B cell (primary cell): ENCODE measurements at regions of chr14 and their contacts with region 1.

Region 1: DNA sequence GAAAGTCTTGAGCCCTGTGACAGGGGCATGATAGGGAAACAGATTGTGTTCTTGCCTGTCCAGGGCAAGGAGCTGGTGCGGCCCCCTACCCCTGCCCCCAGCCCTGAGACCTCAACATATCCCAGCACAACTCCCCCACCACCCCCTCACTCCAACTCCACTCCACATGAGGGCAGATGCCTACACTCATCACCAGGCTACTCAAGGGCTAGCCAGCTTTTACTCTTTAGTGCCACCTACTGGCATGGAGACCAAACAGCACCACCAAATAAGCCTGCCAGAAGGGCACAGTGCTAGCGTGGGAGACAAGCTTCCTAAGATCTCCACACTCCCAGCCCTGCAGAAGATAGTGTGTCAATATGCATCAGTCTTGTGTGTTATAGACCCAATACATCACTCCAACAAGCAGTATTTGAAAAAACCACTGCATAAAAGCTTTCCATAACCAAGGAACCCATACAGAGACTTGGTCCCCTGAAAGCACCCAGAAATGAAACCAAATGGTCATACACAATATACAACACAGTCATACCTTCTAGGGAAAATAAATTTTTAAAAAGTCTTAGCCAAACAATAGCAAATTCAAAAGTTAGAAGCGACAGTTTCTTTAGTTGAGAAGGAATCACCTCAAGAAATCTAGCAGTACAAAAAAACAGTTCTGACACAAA is 154.4 kb downstream of the KCNK10 start:
- DNase-seq: peak; percentile 66
- ATAC-seq: peak; percentile 75
- H3K4me3 ChIP-seq: no peak overlapping the region
- H3K4me3 Mint-ChIP-seq: no peak overlapping the region
- H3K27ac ChIP-seq: no peak overlapping the region
- H3K27ac Mint-ChIP-seq: no peak overlapping the region
- H3K4me1 ChIP-seq: no peaks in the 10 kb centered on the region
- H3K4me1 Mint-ChIP-seq: no peaks in the 10 kb centered on the region
- H3K27me3 ChIP-seq: peaks cover 0 to 21% (median 2%) of the 10 kb centered on the region in 4 experiments
- H3K27me3 Mint-ChIP-seq: peaks cover 42% of the 10 kb centered on the region
- CTCF ChIP-seq: peak; percentile 76

Region 2: DNA sequence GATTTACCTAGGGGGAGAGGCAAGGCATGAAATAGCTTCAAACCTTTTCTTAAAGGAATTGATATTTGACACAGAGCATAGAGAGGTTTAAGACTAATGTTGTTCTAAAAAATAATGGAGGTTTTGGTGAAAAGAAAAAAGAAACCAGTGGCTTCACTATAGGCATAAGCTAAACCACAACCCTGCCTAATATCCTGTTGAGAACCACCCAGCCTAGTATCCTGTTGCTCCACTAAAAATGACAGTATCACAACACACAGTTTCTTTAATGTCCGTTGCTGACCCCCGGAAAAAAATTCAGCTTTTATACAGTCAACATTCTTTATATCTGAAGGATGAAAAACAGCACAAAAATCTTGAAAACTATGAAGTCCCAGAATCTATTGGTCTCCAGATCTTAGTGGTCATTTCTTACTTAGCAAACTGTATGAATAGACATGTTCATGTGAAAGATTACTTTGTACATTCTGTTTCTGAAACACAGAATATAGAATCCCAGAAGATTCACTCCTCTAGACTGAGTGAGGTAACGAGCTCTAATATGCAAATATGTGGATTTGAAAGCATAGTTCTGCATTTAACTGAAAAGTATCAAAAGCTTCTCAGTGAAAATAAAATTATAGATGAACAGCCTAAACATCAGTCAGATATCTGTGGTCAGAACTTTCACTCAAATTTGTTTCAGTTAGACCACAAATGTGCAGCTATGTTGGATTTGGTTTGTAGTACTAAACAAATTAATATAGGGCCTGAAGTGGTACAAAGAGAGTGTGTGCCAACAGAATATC is 216.1 kb before region 1 on chr14:
- CTCF ChIA-PET with region 1: interaction called, 149 read pairs
- POLR2A ChIA-PET with region 1: no interaction called
- intact Hi-C with region 1: no loop called
- DNase-seq: peak; percentile 28
- ATAC-seq: peak; percentile 41
- H3K4me3 ChIP-seq: peak overlapping the region in 2 of 5 experiments; percentile 26 to 47
- H3K4me3 Mint-ChIP-seq: peak overlapping the region; percentile 80
- H3K27ac ChIP-seq: peak overlapping the region; percentile 32 to 82
- H3K27ac Mint-ChIP-seq: peak overlapping the region; percentile 87
- H3K4me1 ChIP-seq: peaks cover 19 to 20% of the 10 kb centered on the region in 2 donors
- H3K4me1 Mint-ChIP-seq: peaks cover 22% of the 10 kb centered on the region
- H3K27me3 ChIP-seq: no peaks in the 10 kb centered on the region
- H3K27me3 Mint-ChIP-seq: no peaks in the 10 kb centered on the region
- CTCF ChIP-seq: no peak

Region 3: GRCh38 chr14:88210426-88210825 is 41.8 kb after region 1 on chr14:
- CTCF ChIA-PET with region 1: no interaction called
- POLR2A ChIA-PET with region 1: no interaction called
- intact Hi-C with region 1: no loop called
- DNase-seq: no peak
- ATAC-seq: no peak
- H3K4me3 ChIP-seq: no peak overlapping the region
- H3K4me3 Mint-ChIP-seq: no peak overlapping the region
- H3K27ac ChIP-seq: no peak overlapping the region
- H3K27ac Mint-ChIP-seq: no peak overlapping the region
- H3K4me1 ChIP-seq: no peaks in the 10 kb centered on the region
- H3K4me1 Mint-ChIP-seq: peaks cover 39% of the 10 kb centered on the region
- H3K27me3 ChIP-seq: peaks cover 0 to 5% (median 0%) of the 10 kb centered on the region in 4 experiments
- H3K27me3 Mint-ChIP-seq: no peaks in the 10 kb centered on the region
- CTCF ChIP-seq: no peak

Region 4: DNA sequence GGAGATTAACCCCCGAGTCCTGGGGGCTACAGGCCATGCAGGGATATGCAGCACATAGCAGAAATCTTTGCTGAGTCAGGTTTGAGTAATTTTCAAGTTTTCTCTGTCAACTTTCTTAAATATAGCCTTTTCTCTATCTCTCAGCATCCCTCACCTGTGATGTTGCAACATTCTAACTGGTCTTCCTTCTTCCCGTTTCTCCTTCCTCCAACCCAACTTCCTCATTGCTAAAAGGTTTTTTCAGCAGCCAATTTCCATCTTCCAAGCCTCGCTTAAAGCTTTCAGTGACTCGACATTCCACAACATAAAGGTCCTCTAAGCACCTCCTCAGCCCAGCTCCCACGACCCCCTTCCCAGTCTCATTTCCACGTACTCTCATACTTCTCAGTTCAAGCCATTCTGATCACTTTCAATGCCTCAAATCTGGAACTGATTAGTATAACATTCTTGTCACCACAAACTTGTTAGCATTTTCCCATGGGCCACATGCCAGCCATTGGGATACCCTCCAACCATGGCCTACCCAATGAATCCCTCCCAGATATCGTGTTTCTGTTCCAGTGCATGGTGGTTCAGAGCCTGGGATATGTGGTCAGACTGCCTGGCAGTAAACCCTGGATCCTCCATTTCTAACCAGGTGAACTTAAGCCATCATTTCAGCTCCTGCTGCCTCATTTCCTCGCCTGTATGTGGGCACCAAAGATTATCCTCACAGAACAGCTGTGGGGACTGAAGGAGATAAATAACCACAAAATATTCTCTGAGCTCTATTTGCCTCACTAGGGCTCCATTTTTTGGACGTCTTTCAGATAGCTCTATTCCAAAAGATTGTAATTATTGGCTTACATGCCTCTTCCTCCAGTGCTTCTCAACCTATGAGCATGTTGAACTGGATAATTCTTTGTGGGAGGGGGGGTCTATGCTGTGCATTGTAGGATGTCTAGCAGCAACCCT is 88.6 kb after region 1 on chr14:
- CTCF ChIA-PET with region 1: no interaction called
- POLR2A ChIA-PET with region 1: no interaction called
- intact Hi-C with region 1: no loop called
- DNase-seq: no peak
- ATAC-seq: no peak
- H3K4me3 ChIP-seq: no peak overlapping the region
- H3K4me3 Mint-ChIP-seq: no peak overlapping the region
- H3K27ac ChIP-seq: no peak overlapping the region
- H3K27ac Mint-ChIP-seq: no peak overlapping the region
- H3K4me1 ChIP-seq: no peaks in the 10 kb centered on the region
- H3K4me1 Mint-ChIP-seq: no peaks in the 10 kb centered on the region
- H3K27me3 ChIP-seq: peaks cover 0 to 1% (median 0%) of the 10 kb centered on the region in 4 experiments
- H3K27me3 Mint-ChIP-seq: peaks cover 20% of the 10 kb centered on the region
- CTCF ChIP-seq: no peak